ENCODE measurements at regions of chr2 and their contacts with region 1.

Region 1: DNA sequence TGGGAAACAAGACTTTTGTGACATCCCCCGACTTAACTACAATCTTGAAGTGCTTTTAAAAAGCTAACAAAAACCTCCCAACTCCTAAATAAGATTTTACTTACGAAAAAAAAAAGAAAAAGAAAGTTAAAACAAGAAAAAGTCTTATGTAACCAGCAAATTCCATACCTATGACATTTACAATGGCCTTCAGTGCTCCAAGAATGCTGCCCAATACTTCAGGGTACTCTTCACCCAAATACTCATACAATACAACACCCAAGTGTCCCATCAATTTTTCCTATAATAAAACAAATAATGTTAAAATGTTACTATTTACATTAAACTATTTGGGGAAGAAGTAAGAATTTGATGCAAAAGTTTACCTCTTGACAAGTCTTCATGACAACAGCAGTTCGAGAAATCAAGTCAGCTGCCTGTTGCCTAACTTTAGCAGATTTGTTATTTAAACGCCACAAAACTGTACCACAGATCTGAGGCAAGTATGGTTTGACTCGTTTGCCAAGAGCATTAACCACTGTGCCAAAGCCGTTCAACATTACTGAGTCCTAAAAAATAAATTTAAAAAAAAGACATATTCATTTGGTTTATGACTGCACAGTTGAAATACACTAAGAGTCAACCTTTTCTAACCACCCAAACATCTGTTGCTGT is 34.8 kb downstream of the SF3B1 start:
- DNase-seq: peak; percentile 20
- ATAC-seq: no peak
- H3K4me3 ChIP-seq: no peak overlapping the region
- H3K27ac ChIP-seq: no peak overlapping the region
- H3K4me1 ChIP-seq: no peaks in the 10 kb centered on the region; the same call in 1 of the 2 replicates
- H3K27me3 ChIP-seq: no peaks in the 10 kb centered on the region
- CTCF ChIP-seq: no peak
- POLR2A ChIP-seq: no peak
- RAD21 ChIP-seq: no peak

Region 2: GRCh38 chr2:197286805-197287598 is 113.0 kb before region 1 on chr2:
- CTCF ChIA-PET with region 1: no interaction called
- POLR2A ChIA-PET with region 1: no interaction called
- dilution Hi-C with region 1: no loop called
- in situ Hi-C with region 1: no loop called
- intact Hi-C with region 1: no loop called
- DNase-seq: peak; percentile 97
- ATAC-seq: peak; percentile 99
- H3K4me3 ChIP-seq: no peak overlapping the region
- H3K27ac ChIP-seq: peak overlapping the region; percentile 41; the same call in 1 of the 2 replicates
- H3K4me1 ChIP-seq: peaks cover 4% of the 10 kb centered on the region
- H3K27me3 ChIP-seq: no peaks in the 10 kb centered on the region
- CTCF ChIP-seq: no peak
- POLR2A ChIP-seq: no peak
- RAD21 ChIP-seq: no peak

Region 3: GRCh38 chr2:197416268-197416667 is 16.3 kb after region 1 on chr2:
- CTCF ChIA-PET with region 1: interaction called, 3 read pairs
- POLR2A ChIA-PET with region 1: no interaction called
- dilution Hi-C with region 1: no loop called
- in situ Hi-C with region 1: no loop called
- intact Hi-C with region 1: loop called (anchors 2 kb)
- DNase-seq: no peak
- ATAC-seq: no peak
- H3K4me3 ChIP-seq: no peak overlapping the region
- H3K27ac ChIP-seq: no peak overlapping the region
- H3K4me1 ChIP-seq: no peaks in the 10 kb centered on the region; the same call in 1 of the 2 replicates
- H3K27me3 ChIP-seq: no peaks in the 10 kb centered on the region
- CTCF ChIP-seq: no peak
- POLR2A ChIP-seq: no peak
- RAD21 ChIP-seq: no peak

Region 4: DNA sequence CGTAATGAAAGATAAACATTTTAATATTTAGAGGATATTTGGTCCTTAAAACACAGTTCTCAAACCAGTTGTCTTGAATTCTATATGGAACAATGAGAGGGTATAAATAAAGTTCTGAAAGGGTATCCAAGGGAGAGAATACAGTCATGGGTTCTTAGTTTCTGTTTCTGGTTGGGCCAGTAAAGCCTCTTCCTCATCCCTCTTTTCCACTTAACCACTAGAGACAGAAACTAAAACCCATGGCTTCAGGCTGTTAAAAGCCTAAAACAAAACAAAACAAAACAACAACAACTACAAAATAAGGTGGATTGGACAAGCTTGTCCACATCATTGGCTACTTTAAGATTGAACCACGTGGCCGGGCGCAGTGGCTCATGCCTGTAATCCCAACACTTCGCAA is 72.2 kb after region 1 on chr2:
- CTCF ChIA-PET with region 1: no interaction called
- POLR2A ChIA-PET with region 1: no interaction called
- dilution Hi-C with region 1: no loop called
- in situ Hi-C with region 1: no loop called
- intact Hi-C with region 1: loop called (anchors 5 kb)
- DNase-seq: no peak
- ATAC-seq: no peak
- H3K4me3 ChIP-seq: no peak overlapping the region
- H3K27ac ChIP-seq: no peak overlapping the region
- H3K4me1 ChIP-seq: no peaks in the 10 kb centered on the region
- H3K27me3 ChIP-seq: no peaks in the 10 kb centered on the region
- CTCF ChIP-seq: no peak
- POLR2A ChIP-seq: no peak
- RAD21 ChIP-seq: no peak

Region 5: DNA sequence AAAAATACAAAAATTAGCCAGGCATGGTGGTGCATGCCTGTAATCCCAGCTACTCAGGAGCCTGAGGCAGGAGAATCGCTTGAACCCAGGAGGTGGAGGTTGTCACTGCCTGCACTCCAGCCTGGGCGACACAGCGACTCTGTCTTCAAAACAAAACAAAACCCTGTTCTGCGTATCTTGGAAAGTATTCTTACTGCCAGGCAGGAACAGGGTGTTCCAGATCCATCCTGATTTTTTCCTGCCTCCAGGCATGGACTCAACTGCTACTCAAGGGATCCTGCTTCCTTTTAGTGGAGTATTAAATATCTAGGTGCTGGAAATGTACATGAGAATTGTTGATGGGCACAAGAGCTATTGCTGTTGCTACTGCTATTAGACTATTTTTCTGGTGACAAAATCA is 87.4 kb after region 1 on chr2:
- CTCF ChIA-PET with region 1: no interaction called
- POLR2A ChIA-PET with region 1: no interaction called
- dilution Hi-C with region 1: no loop called
- in situ Hi-C with region 1: no loop called
- intact Hi-C with region 1: loop called (anchors 2 kb)
- DNase-seq: no peak
- ATAC-seq: no peak
- H3K4me3 ChIP-seq: no peak overlapping the region
- H3K27ac ChIP-seq: no peak overlapping the region
- H3K4me1 ChIP-seq: no peaks in the 10 kb centered on the region
- H3K27me3 ChIP-seq: no peaks in the 10 kb centered on the region
- CTCF ChIP-seq: no peak
- POLR2A ChIP-seq: no peak
- RAD21 ChIP-seq: no peak

Region 6: GRCh38 chr2:197571627-197572271 is 171.7 kb after region 1 on chr2:
- CTCF ChIA-PET with region 1: no interaction called
- POLR2A ChIA-PET with region 1: no interaction called
- dilution Hi-C with region 1: no loop called
- in situ Hi-C with region 1: no loop called
- intact Hi-C with region 1: no loop called
- DNase-seq: peak; percentile 56
- ATAC-seq: peak; percentile 58
- H3K4me3 ChIP-seq: no peak overlapping the region
- H3K27ac ChIP-seq: peak overlapping the region; percentile 2; the same call in 1 of the 2 replicates
- H3K4me1 ChIP-seq: peaks cover 7% of the 10 kb centered on the region; the same call in 1 of the 2 replicates
- H3K27me3 ChIP-seq: no peaks in the 10 kb centered on the region
- CTCF ChIP-seq: no peak
- POLR2A ChIP-seq: no peak
- RAD21 ChIP-seq: no peak

Region 7: GRCh38 chr2:197657562-197657961 is 257.5 kb after region 1 on chr2:
- CTCF ChIA-PET with region 1: no interaction called
- POLR2A ChIA-PET with region 1: no interaction called
- dilution Hi-C with region 1: no loop called
- in situ Hi-C with region 1: no loop called
- intact Hi-C with region 1: no loop called
- DNase-seq: no peak
- ATAC-seq: no peak
- H3K4me3 ChIP-seq: no peak overlapping the region
- H3K27ac ChIP-seq: no peak overlapping the region
- H3K4me1 ChIP-seq: no peaks in the 10 kb centered on the region
- H3K27me3 ChIP-seq: no peaks in the 10 kb centered on the region
- CTCF ChIP-seq: no peak
- POLR2A ChIP-seq: no peak
- RAD21 ChIP-seq: no peak

Measured in IMR-90 (cell line).